CD4-positive, alpha-beta T cell (primary cell): ENCODE measurements at regions of chr7 and their contacts with region 1.

Region 1: DNA sequence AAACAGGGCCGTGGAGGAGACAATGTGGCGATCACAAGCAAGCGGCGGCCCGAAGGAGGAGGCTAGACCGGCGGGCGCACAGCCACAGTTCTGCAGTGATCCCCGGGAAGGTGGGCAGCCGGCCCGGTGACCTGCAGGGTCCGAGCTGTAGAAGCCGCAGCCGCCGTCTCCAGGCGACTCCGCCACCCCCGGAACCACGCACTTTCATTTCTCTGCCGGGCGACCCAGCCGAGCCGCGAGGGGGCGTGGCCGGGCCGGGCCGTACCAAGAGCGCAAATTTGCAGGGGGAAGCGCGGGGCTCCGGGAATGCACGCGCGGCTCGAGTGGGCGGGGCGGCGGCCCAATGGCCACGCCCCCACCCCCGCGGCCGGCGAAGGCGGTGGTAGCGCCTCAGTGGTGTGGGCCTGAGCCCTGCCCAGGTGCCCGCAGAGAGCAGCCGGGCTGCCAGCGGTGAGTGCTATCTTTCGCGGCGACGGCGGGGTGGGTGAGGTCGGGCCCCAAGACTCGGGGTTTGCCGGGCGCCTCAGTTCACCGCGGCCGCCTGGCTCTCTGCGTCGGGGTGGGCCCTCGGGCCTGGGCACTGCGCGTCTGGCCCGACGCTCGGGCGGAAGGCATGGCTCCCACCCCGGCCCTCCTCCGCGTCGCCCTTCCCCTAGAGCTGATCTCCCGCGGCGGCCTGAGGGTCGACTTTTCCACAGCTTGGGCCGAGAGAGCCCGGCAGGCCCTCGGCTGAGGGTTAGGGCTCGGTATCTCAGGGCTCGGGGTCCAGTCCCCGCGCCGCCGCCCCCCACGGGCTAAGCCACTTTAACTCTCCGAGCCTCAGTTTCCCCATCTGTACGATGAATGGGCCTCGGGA is at the start of gene POR:
- DNase-seq: peak; percentile 92 to 99 (median 97)
- ATAC-seq: peak; percentile 94
- H3K4me3 ChIP-seq: peak within 1 kb of the TSS; percentile 99
- H3K4me3 Mint-ChIP-seq: peak within 1 kb of the TSS; percentile 95
- H3K27ac ChIP-seq: peak within 1 kb of the TSS; percentile 90 to 91
- H3K27ac Mint-ChIP-seq: peak within 1 kb of the TSS; percentile 98
- H3K4me1 ChIP-seq: peaks cover 54% of the 10 kb centered on the region
- H3K4me1 Mint-ChIP-seq: peaks cover 48% of the 10 kb centered on the region
- H3K27me3 ChIP-seq: no peaks in the 10 kb centered on the region
- H3K27me3 Mint-ChIP-seq: no peaks in the 10 kb centered on the region
- CTCF ChIP-seq: no peak
- total RNA-seq, gene POR: 44.2 to 54.8 TPM

Region 2: DNA sequence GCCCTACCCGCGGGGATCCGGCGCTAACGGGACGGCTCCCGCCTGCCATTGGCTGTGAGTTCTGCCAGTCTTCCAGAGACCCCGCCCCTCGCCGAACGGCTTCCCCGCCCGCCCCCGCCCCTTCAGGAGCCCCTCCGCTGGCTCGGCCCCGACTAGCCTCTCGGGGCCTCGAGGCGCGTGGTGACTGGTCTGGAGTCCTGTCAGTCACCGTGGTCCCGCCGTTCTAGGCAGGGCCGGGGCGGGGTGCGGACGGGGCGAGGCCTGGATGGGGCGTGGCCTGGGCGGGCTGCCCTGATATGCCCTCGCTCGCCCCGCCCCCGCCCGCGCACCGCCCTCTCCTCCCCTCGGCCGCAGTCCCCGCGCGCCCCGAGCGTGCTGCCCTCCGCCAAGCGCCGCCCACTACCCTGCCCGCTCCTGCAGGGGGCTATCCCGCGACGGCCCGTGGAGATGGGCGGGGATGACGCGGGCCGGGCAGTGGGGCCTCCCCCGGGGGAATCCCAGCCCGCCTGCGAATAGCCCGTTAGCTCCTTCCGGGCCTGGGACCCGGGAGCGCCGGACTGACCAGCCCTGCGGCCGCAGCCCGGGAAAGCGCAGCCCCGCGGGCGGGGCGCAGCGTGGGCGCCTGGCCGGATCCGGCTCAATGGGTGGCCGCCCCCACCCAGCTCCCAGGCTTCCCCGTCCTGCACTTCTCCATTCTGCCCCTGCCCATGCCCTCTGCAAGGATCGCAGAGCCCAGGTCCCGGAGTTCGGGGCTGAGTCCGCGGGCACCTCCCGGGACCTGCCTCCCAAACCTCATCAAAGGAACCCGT is 175.8 kb before region 1 on chr7:
- CTCF ChIA-PET with region 1: no interaction called
- POLR2A ChIA-PET with region 1: interaction called, 4 read pairs
- intact Hi-C with region 1: loop called in 1 of 2 experiments (anchors 2 kb)
- DNase-seq: peak; percentile 99 to 100 (median 100)
- ATAC-seq: peak; percentile 91
- H3K4me3 ChIP-seq: peak overlapping the region; percentile 82
- H3K4me3 Mint-ChIP-seq: peak overlapping the region; percentile 100
- H3K27ac ChIP-seq: peak overlapping the region; percentile 77
- H3K27ac Mint-ChIP-seq: peak overlapping the region; percentile 89
- H3K4me1 ChIP-seq: peaks cover 21% of the 10 kb centered on the region
- H3K4me1 Mint-ChIP-seq: peaks cover 16% of the 10 kb centered on the region
- H3K27me3 ChIP-seq: no peaks in the 10 kb centered on the region
- H3K27me3 Mint-ChIP-seq: peaks cover 4% of the 10 kb centered on the region
- CTCF ChIP-seq: no peak

Region 3: DNA sequence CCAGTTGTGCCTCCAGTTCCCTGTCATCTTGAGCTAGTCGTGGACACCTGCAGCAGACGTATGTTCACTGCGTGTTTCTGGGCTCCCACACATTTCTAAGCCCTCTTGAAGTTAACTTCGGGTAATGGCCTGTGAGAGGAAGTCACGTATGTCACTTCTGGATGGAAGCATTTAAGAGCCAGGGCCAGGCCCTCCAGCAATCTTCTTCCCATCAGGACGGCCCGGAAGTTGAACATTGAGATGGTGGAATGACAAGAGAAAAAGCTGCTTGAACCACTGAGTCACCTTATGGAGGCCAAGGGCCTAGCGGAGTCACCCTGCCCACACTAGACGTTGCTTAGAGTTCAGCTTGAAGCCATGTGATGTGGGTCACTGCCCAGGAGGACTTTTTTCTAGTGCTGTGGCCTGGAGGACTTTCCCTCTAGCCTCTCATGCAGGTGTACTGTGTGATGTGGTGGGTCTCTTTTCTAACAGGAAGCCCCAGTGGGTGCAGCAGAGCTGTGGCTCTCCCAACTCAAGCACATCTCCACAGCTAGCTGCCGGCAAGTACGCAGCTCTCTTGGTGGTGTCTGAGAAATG is 13.5 kb after region 1 on chr7:
- CTCF ChIA-PET with region 1: interaction called, 3 read pairs
- POLR2A ChIA-PET with region 1: interaction called, 12 read pairs
- intact Hi-C with region 1: no loop called
- DNase-seq: peak in 11 of 14 experiments; percentile 4 to 72 (median 24)
- ATAC-seq: peak; percentile 89
- H3K4me3 ChIP-seq: no peak overlapping the region
- H3K4me3 Mint-ChIP-seq: peak overlapping the region; percentile 54
- H3K27ac ChIP-seq: no peak overlapping the region
- H3K27ac Mint-ChIP-seq: peak overlapping the region; percentile 85
- H3K4me1 ChIP-seq: peaks cover 12% of the 10 kb centered on the region
- H3K4me1 Mint-ChIP-seq: peaks cover 25% of the 10 kb centered on the region
- H3K27me3 ChIP-seq: no peaks in the 10 kb centered on the region
- H3K27me3 Mint-ChIP-seq: no peaks in the 10 kb centered on the region
- CTCF ChIP-seq: no peak

Region 4: GRCh38 chr7:75962607-75963380 is 47.8 kb after region 1 on chr7:
- CTCF ChIA-PET with region 1: no interaction called
- POLR2A ChIA-PET with region 1: no interaction called
- intact Hi-C with region 1: no loop called
- DNase-seq: no peak
- ATAC-seq: no peak
- H3K4me3 ChIP-seq: no peak overlapping the region
- H3K4me3 Mint-ChIP-seq: no peak overlapping the region
- H3K27ac ChIP-seq: no peak overlapping the region
- H3K27ac Mint-ChIP-seq: no peak overlapping the region
- H3K4me1 ChIP-seq: no peaks in the 10 kb centered on the region
- H3K4me1 Mint-ChIP-seq: peaks cover under 1% of the 10 kb centered on the region
- H3K27me3 ChIP-seq: no peaks in the 10 kb centered on the region
- H3K27me3 Mint-ChIP-seq: no peaks in the 10 kb centered on the region
- CTCF ChIP-seq: no peak

Region 5: DNA sequence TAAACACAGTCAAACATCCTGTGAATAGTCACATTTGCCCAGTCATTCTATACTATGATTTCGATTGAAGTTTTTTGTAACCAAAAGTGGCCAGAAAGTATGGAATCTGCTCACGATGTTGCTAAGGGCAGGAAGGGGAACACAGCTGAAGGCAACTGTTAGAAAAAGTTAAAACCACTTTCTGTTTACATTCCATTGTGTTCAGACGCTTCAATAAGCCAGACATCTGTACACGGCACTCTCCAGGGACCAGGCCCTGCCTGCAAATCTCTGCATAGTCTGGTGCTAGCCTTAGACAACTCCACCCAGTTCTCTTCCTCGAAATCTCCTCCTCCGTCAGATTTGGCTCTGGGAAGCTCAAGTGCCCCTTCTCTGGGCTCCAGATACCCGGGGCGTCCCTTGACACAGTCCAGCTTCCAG is 96.5 kb after region 1 on chr7:
- CTCF ChIA-PET with region 1: no interaction called
- POLR2A ChIA-PET with region 1: interaction called, 16 read pairs
- intact Hi-C with region 1: no loop called
- DNase-seq: no peak
- ATAC-seq: no peak
- H3K4me3 ChIP-seq: no peak overlapping the region
- H3K4me3 Mint-ChIP-seq: no peak overlapping the region
- H3K27ac ChIP-seq: no peak overlapping the region
- H3K27ac Mint-ChIP-seq: no peak overlapping the region
- H3K4me1 ChIP-seq: peaks cover 29% of the 10 kb centered on the region
- H3K4me1 Mint-ChIP-seq: peaks cover 34% of the 10 kb centered on the region
- H3K27me3 ChIP-seq: no peaks in the 10 kb centered on the region
- H3K27me3 Mint-ChIP-seq: no peaks in the 10 kb centered on the region
- CTCF ChIP-seq: no peak

Region 6: DNA sequence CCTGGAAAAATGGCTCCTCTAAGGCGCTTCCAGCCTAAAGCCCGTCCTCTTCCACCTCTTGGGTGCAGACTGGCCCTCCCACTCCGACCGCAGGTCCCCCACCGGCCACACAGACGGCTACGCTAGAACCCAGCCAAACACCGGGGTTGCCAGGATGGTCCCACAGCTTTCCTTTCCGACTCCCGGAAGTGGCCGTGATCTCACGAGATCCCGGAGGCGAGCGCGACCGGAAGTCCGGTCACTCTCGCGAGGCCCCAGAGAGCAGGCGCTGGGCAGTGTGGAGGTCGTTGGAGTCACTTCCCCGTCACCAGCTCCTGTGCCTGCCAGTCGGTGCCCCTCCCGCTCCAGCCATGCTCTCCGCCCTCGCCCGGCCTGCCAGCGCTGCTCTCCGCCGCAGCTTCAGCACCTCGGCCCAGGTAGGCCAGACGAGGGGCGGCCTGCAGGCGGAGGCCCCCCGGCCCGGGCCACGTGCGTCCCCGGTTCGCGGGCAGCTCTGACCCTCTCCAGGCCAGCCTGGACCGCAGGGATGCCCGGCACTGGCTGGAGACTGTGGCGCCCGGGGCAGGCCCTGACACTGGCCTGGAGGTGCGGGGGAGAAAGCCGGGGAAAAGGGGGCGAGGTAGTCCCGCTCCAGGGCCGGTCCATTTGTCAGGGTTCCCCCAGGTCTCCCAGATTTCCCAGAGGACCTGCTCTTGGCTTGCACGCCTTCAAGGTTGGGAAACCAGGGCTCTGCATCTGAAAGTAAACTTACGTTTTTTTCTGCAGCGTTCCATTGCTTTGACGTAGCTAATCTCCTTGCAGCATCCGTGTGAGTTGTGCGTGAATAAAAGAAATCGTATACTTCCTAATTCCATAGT is 133.1 kb after region 1 on chr7 and contains the starts of genes MDH2 and STYXL1:
- CTCF ChIA-PET with region 1: no interaction called
- POLR2A ChIA-PET with region 1: interaction called, 21 read pairs
- intact Hi-C with region 1: no loop called
- DNase-seq: peak; percentile 69 to 94 (median 78)
- ATAC-seq: peak; percentile 76
- H3K4me3 ChIP-seq: peak within 1 kb of the TSS; percentile 100
- H3K4me3 Mint-ChIP-seq: peak within 1 kb of the TSS; percentile 93
- H3K27ac ChIP-seq: peak within 1 kb of the TSS; percentile 65 to 96
- H3K27ac Mint-ChIP-seq: peak within 1 kb of the TSS; percentile 96
- H3K4me1 ChIP-seq: peaks cover 57% of the 10 kb centered on the region
- H3K4me1 Mint-ChIP-seq: peaks cover 65% of the 10 kb centered on the region
- H3K27me3 ChIP-seq: no peaks in the 10 kb centered on the region
- H3K27me3 Mint-ChIP-seq: no peaks in the 10 kb centered on the region
- CTCF ChIP-seq: no peak
- total RNA-seq, gene MDH2: 66.4 to 68.3 TPM
- total RNA-seq, gene STYXL1: 8.4 to 8.5 TPM